Kidney (tissue), 22 donors: ENCODE measurements at regions of chr17 and their contacts with region 1.

Region 1: DNA sequence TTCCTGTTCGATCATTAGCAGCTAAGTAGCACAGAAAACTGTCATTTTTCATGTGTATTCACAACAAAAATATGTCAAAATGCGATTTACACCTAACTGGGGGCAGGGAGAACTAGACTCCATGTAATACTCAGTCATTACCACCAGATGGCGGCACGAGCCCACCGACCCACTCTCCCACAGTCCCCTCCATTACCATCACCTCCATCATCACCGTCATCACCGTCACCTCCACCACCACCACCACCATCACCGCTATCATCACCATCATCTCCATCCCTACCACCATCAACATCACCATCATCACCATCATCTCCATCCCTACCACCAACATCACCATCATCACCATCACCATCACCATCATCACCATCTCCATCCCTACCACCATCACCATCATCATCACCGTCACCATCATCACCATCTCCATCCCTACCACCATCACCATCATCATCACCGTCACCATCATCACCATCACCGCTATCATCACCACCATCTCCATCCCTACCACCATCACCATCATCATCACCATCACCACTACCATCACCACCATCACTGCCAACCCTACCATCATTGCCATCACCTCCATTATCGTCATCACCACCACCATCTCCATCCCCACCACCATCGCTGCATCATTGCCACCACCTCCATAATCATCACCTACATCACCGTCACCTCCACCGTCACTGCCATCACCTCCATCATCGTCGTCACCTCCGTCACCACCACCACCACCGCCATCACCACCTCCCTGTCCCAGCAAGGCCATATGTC is 14.4 kb downstream of the NDUFAF8 start:
- DNase-seq: peak in 2 of 5 donors; percentile 62 to 66
- H3K4me3 ChIP-seq: no peak overlapping the region
- H3K27ac ChIP-seq: no peak overlapping the region
- H3K4me1 ChIP-seq: peaks cover 0 to 17% (median 12%) of the 10 kb centered on the region in 3 donors
- H3K27me3 ChIP-seq: no peaks in the 10 kb centered on the region
- CTCF ChIP-seq: peak; percentile 88

Region 2: DNA sequence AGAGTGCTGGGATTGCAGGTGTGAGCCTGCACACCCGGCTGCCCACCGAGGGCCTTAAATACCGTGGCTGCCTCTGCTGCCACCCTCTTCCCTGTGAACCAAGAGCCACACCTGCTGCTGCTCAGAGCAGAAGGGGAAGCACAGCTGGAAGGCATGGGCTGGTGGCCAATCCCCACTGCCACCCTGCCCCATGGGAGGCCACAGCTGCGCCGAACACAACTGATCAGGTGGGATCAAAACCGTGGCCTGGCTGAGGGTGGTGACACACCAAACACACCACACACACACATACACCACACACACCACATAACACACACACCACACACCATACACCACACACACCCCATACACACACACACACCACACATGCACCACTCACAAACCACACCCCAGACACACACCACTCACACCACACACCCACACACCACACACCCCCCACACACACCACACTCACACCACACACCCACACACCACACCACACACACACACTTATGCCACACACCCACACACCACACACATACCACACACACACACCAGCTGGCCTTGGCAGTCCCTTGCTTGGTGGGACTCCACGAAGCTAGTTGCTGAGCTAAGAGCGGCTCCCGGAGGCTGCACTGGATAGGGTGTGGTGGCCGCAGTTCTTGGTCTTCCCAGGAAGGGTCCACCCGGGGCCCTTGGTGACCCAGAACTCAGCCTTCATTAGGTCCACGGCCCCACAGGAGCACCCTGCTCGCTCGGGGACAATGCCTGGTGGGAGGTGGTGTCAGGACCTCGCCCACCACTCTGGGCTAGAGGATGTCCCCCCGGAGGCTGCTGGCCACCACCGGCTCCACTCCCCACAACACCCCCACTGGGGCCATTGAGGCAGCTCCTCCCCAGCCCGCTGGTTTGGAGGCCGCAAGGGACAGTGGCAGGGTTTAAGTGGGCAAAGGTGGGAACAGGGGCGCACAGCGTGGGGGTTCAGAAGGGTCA is 45.6 kb before region 1 on chr17:
- intact Hi-C with region 1: no loop called
- DNase-seq: no peak
- H3K4me3 ChIP-seq: no peak overlapping the region
- H3K27ac ChIP-seq: no peak overlapping the region
- H3K4me1 ChIP-seq: no peaks in the 10 kb centered on the region
- H3K27me3 ChIP-seq: no peaks in the 10 kb centered on the region
- CTCF ChIP-seq: no peak

Region 3: GRCh38 chr17:81484195-81484979 is 230.8 kb after region 1 on chr17:
- intact Hi-C with region 1: loop called (anchors 10 kb)
- DNase-seq: peak; percentile 90 to 96 (median 93)
- H3K4me3 ChIP-seq: peak overlapping the region in 2 of 3 donors; percentile 20 to 55
- H3K27ac ChIP-seq: no peak overlapping the region
- H3K4me1 ChIP-seq: peaks cover 0 to 18% (median 4%) of the 10 kb centered on the region in 3 donors
- H3K27me3 ChIP-seq: no peaks in the 10 kb centered on the region
- CTCF ChIP-seq: peak; percentile 100